ENCODE measurements at regions of chr9 and their contacts with region 1.

Region 1: DNA sequence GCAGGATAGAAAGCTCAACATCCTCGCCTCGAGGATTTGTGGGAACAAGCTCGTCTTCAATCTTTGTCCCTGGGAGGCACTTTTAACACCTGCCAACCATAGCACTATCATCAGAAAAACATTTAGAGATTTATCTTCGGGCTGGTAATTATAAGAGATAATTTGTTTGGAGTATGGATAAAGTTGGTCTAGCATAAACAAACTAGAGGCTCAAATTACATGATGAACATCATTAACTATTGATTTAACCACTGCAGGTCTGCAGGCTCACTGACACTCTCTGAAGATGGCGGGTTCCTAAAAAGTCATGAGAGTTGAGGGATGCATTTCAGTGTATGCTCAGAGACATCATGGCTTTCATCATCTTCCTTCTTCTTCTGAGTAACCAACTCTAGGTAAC is 25.8 kb upstream of the PCA3 start:
- DNase-seq: no peak
- ATAC-seq: no peak
- H3K4me3 ChIP-seq: no peak overlapping the region
- H3K27ac ChIP-seq: no peak overlapping the region
- H3K4me1 ChIP-seq: no peaks in the 10 kb centered on the region
- H3K27me3 ChIP-seq: no peaks in the 10 kb centered on the region
- CTCF ChIP-seq: no peak

Region 2: DNA sequence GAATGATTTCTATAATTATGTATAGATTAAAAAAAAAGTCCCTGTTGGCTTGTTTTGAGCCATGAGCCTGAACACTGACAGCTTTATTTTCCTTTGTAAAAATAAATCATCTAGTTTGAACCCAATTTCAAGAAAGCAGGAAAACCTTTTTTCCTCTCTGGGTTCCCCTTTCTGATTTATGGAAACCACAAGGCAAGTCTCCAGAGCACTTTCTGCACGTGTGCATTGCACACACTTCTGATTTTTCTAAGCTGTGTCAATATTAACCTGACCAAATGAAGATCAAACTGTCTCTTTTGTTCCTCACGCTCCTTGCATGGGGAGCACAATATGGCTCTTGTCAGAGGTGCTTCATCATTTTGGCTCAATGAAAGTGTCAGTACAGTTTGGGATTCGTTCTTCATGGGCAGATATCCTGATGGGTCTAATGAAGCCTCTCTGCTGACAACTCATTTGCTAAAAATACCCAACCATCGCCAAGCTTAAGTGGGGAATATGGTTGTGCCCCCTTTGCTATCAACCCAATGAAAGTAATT is 13.3 kb before region 1 on chr9:
- CTCF ChIA-PET with region 1: no interaction called
- POLR2A ChIA-PET with region 1: interaction called, 10 read pairs
- in situ Hi-C with region 1: no loop called
- intact Hi-C with region 1: no loop called
- DNase-seq: no peak
- ATAC-seq: no peak
- H3K4me3 ChIP-seq: no peak overlapping the region
- H3K27ac ChIP-seq: no peak overlapping the region
- H3K4me1 ChIP-seq: no peaks in the 10 kb centered on the region
- H3K27me3 ChIP-seq: no peaks in the 10 kb centered on the region
- CTCF ChIP-seq: no peak

Region 3: DNA sequence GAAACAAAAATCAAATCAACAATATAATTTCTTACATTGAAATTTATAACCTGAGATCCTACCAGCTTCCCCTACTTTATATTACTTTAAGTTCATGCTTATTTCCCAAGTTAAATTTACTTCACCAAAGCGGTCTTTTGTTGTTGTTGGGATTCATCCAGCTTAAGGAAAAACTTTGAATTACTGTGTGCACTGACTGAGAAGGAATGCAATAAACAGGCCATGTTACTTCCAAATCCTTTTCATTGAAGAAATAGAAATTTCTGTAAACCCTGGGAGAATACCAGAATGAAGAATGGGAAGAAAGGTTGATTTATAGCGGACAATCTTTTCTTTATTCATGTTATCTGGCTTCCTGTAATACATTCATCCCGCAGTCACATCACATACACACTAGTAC is 34.6 kb after region 1 on chr9:
- CTCF ChIA-PET with region 1: no interaction called
- POLR2A ChIA-PET with region 1: interaction called, 16 read pairs
- in situ Hi-C with region 1: no loop called
- intact Hi-C with region 1: no loop called
- DNase-seq: no peak
- ATAC-seq: no peak
- H3K4me3 ChIP-seq: no peak overlapping the region
- H3K27ac ChIP-seq: no peak overlapping the region
- H3K4me1 ChIP-seq: no peaks in the 10 kb centered on the region
- H3K27me3 ChIP-seq: no peaks in the 10 kb centered on the region
- CTCF ChIP-seq: no peak

Measured in Panc1 (cell line).